ENCODE measurements at regions of chr10 and their contacts with region 1.

Region 1: GRCh38 chr10:3785257-3785850 is 345 bp upstream of the KLF6 start:
- DNase-seq: peak; percentile 99
- ATAC-seq: peak; percentile 76
- H3K4me3 Mint-ChIP-seq: peak overlapping the region; percentile 92
- H3K27ac Mint-ChIP-seq: peak overlapping the region; percentile 99
- H3K4me1 Mint-ChIP-seq: peaks cover 39% of the 10 kb centered on the region
- H3K27me3 Mint-ChIP-seq: no peaks in the 10 kb centered on the region

Region 2: GRCh38 chr10:3727268-3727667 is 58.1 kb before region 1 on chr10:
- POLR2A ChIA-PET with region 1: no interaction called
- DNase-seq: no peak
- ATAC-seq: no peak
- H3K4me3 Mint-ChIP-seq: no peak overlapping the region
- H3K27ac Mint-ChIP-seq: no peak overlapping the region
- H3K4me1 Mint-ChIP-seq: no peaks in the 10 kb centered on the region
- H3K27me3 Mint-ChIP-seq: peaks cover 25% of the 10 kb centered on the region

Region 3: GRCh38 chr10:3757638-3758490 is 27.5 kb before region 1 on chr10:
- POLR2A ChIA-PET with region 1: interaction called, 42 read pairs
- DNase-seq: no peak
- ATAC-seq: peak; percentile 94
- H3K4me3 Mint-ChIP-seq: peak overlapping the region; percentile 69
- H3K27ac Mint-ChIP-seq: peak overlapping the region; percentile 88
- H3K4me1 Mint-ChIP-seq: peaks cover 40% of the 10 kb centered on the region
- H3K27me3 Mint-ChIP-seq: no peaks in the 10 kb centered on the region

Region 4: DNA sequence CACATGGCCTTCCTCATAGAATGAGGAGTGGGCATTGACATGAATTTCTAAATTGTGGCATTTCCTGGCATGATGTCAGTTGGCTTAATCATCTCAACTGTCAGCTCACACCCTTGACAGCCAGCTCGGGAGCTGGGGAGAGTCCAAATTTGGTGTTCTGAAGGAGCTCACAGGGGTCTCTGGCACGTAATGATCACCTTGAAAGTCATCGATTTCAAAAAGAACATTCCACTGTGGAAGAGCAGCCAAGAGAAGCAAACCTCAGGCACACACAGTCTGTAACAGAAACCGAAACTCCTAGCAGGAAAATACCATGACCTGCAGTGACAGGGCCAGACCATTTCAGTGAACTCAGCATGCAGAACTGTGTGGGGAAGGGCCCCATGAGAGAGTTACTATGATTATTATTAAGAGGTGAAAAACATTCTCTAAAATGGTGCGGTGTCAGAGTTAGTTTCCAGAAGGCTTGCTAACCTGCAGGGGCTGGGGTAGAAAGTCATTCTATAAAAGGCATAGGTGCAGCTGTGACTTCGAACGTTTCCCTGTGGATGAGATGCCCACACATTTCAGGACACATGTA is 26.0 kb after region 1 on chr10:
- POLR2A ChIA-PET with region 1: interaction called, 533 read pairs
- DNase-seq: no peak
- ATAC-seq: peak; percentile 41
- H3K4me3 Mint-ChIP-seq: peak overlapping the region; percentile 81
- H3K27ac Mint-ChIP-seq: peak overlapping the region; percentile 97
- H3K4me1 Mint-ChIP-seq: peaks cover 75% of the 10 kb centered on the region
- H3K27me3 Mint-ChIP-seq: no peaks in the 10 kb centered on the region

Region 5: DNA sequence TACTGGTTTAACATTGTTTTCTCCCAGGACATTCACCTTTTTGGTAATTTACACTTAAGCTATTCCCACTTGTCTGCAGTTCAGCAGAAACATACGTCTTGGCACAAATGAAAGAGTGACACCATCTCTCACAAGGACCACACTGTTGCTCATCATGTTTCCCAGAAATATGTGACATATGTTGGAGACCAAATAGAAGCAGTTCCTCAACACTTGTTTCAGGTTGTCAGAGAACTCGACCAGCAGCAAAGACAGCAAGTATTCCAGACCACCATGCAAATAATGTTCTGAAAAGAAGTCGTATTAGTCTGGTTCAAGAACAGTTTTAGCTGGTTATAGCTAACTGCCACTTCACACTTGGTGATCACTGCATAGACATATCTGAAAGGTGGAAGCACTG is 81.0 kb after region 1 on chr10:
- POLR2A ChIA-PET with region 1: interaction called, 14 read pairs
- DNase-seq: no peak
- ATAC-seq: peak; percentile 34
- H3K4me3 Mint-ChIP-seq: no peak overlapping the region
- H3K27ac Mint-ChIP-seq: peak overlapping the region; percentile 28
- H3K4me1 Mint-ChIP-seq: peaks cover 22% of the 10 kb centered on the region
- H3K27me3 Mint-ChIP-seq: no peaks in the 10 kb centered on the region

Region 6: DNA sequence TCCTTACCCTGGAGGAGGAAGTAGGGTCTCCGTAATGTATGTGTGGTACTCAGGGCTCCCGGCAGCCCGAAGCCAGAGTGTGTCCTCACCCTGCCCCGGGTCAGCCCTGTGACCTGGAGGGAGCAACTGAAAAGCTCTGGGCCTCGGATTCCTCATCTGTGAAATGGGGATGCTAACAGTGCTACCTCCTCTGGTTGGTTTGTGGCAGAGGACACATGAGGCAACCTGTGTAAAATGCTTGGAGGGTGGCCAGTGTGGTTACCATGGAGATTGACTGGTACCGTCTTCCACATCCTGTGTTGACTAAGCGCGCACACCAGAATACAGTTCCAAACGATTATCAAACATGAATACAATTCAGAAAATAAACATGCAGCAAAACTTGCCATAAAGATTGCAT is 163.5 kb after region 1 on chr10:
- POLR2A ChIA-PET with region 1: interaction called, 258 read pairs
- DNase-seq: peak; percentile 62
- ATAC-seq: peak; percentile 78
- H3K4me3 Mint-ChIP-seq: peak overlapping the region; percentile 79
- H3K27ac Mint-ChIP-seq: peak overlapping the region; percentile 88
- H3K4me1 Mint-ChIP-seq: peaks cover 75% of the 10 kb centered on the region
- H3K27me3 Mint-ChIP-seq: no peaks in the 10 kb centered on the region

Region 7: DNA sequence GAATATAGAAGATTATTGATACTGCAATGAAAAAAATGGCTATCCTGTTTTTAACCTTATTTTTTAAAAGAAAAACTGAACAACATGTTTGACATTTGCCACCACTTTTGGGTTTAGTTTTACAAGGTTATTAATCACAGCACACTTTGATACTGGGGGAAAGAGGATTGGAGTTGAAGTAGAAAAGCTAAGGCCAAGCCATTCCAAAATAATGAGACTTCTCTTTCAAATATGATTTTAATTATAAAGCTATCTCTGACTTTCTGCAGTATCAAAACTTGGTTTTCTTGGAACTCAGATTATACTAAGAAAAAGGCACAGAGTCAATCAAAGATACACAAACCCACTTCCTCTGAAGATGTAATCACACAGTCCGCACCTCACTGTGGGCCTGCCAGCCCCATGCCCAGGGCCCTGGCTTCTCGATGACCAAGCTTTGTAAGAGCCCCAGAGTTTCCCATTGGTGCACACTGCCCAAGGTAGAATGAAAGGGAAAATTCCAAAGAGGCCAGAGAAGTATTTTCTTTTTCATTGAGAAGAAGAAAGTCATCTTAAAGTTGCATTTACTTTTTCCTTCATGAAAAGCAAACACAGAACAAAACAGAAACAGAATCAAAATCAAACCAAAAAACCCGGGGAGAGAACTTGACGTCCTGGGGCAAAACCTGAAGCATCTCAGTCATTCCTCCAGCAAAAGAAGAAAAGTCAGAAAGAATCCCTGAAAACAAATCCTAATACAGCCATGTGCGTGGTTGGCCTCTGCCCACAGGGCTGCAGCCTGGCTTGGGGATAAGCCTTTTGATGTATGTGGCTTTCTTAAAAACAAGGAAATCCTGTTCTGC is 187.3 kb after region 1 on chr10:
- POLR2A ChIA-PET with region 1: interaction called, 103 read pairs
- DNase-seq: no peak
- ATAC-seq: peak; percentile 89
- H3K4me3 Mint-ChIP-seq: peak overlapping the region; percentile 82
- H3K27ac Mint-ChIP-seq: peak overlapping the region; percentile 96
- H3K4me1 Mint-ChIP-seq: peaks cover 51% of the 10 kb centered on the region
- H3K27me3 Mint-ChIP-seq: no peaks in the 10 kb centered on the region